ENCODE measurements at regions of chr14 and their contacts with region 1.

Region 1: GRCh38 chr14:59576332-59577294 is at the start of gene CCDC175:
- DNase-seq: peak; percentile 77 to 87
- ATAC-seq: peak; percentile 96 to 100
- H3K4me3 ChIP-seq: peak within 1 kb of the TSS; percentile 58
- H3K27ac ChIP-seq: peak within 1 kb of the TSS; percentile 52 to 71; a peak in 4 of 6 replicates
- H3K4me1 ChIP-seq: no peaks in the 10 kb centered on the region
- CTCF ChIP-seq: peak; percentile 91
- EP300 ChIP-seq: no peak
- POLR2A ChIP-seq: no peak
- RAD21 ChIP-seq: peak; percentile 78 to 85
- polyA plus RNA-seq, gene CCDC175: not detected in 2 replicates

Region 2: GRCh38 chr14:59483900-59484638 is 92.5 kb before region 1 on chr14 and contains the starts of genes JKAMP and L3HYPDH:
- CTCF ChIA-PET with region 1: interaction called, 19 read pairs
- POLR2A ChIA-PET with region 1: interaction called, 13 read pairs
- DNase-seq: peak; percentile 83 to 96
- ATAC-seq: peak; percentile 83 to 89
- H3K4me3 ChIP-seq: peak within 1 kb of the TSS; percentile 82
- H3K27ac ChIP-seq: peak within 1 kb of the TSS; percentile 98
- H3K4me1 ChIP-seq: peaks cover 39% of the 10 kb centered on the region
- CTCF ChIP-seq: peak; percentile 65
- EP300 ChIP-seq: no peak
- POLR2A ChIP-seq: peak; percentile 84
- RAD21 ChIP-seq: no peak; a peak in 1 of 5 replicates
- polyA plus RNA-seq, gene JKAMP: 254 and 266 TPM in 2 replicates
- polyA plus RNA-seq, gene L3HYPDH: 67.9 and 100.0 TPM in 2 replicates

Region 3: GRCh38 chr14:59490756-59491155 is 85.9 kb before region 1 on chr14:
- CTCF ChIA-PET with region 1: interaction called, 12 read pairs
- POLR2A ChIA-PET with region 1: no interaction called
- DNase-seq: no peak
- ATAC-seq: no peak
- H3K4me3 ChIP-seq: no peak overlapping the region
- H3K27ac ChIP-seq: no peak overlapping the region
- H3K4me1 ChIP-seq: peaks cover 9% of the 10 kb centered on the region
- CTCF ChIP-seq: no peak
- EP300 ChIP-seq: no peak
- POLR2A ChIP-seq: no peak
- RAD21 ChIP-seq: no peak

Region 4: DNA sequence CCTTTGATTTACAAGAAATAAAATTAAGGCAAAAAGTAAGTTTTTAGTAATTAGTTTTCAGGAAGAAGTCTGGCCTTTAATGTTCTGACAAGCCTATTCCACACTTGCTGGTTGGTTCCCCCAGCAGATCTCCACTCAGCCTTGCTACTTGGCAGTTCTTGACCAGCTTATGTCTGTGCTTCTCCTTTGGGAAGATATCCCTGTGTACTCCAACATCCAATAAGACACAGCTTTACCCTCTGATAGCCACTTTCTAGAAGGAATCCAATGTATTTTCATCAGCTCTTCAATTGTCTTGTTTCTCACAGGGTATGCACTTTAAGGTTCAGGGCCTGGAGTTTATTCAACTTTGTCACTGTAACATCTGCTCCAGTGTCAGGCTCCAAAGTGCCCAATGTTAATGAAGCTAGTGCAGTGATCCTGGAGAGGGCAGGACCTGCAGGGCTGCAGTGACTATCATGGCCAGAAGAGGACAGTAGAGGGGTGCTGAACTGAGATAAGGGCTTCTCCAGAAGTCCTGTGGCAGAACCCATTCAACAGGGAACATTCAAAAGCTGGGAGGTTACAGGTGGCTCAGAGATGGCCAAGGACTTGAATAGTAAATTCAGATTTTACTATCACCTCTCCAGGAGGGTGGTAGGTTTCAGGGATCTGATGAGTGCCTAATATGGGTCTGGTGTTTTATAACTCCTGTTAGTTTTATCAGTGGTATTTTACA is 69.4 kb before region 1 on chr14:
- CTCF ChIA-PET with region 1: interaction called, 52 read pairs
- POLR2A ChIA-PET with region 1: interaction called, 3 read pairs
- DNase-seq: peak; percentile 45 to 63
- ATAC-seq: peak; percentile 95
- H3K4me3 ChIP-seq: no peak overlapping the region
- H3K27ac ChIP-seq: no peak overlapping the region
- H3K4me1 ChIP-seq: no peaks in the 10 kb centered on the region
- CTCF ChIP-seq: peak; percentile 57
- EP300 ChIP-seq: no peak
- POLR2A ChIP-seq: no peak
- RAD21 ChIP-seq: peak; percentile 50 to 62; a peak in 4 of 5 replicates

Region 5: DNA sequence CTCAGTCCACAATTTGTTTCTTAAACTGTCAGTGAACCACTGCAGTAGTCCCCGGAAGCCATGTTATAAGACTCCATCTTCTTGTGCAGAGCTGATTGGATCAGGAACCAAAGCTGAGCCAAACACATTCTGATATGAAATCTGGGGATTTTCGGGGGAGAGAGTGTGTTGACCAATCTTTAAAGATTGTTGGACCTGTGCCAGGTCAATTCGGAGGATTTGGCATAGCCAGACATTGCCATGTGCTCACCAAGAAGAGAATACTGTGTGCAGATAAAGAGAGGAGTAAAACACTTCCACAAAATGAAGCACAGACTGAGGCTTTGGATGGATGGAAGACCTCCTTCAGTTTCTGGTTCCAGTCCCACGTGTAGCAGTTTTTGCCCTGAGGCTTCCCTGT is 16.3 kb before region 1 on chr14:
- CTCF ChIA-PET with region 1: interaction called, 16 read pairs
- POLR2A ChIA-PET with region 1: no interaction called
- DNase-seq: no peak
- ATAC-seq: no peak
- H3K4me3 ChIP-seq: no peak overlapping the region
- H3K27ac ChIP-seq: no peak overlapping the region
- H3K4me1 ChIP-seq: no peaks in the 10 kb centered on the region
- CTCF ChIP-seq: no peak
- EP300 ChIP-seq: no peak
- POLR2A ChIP-seq: no peak
- RAD21 ChIP-seq: no peak

Region 6: DNA sequence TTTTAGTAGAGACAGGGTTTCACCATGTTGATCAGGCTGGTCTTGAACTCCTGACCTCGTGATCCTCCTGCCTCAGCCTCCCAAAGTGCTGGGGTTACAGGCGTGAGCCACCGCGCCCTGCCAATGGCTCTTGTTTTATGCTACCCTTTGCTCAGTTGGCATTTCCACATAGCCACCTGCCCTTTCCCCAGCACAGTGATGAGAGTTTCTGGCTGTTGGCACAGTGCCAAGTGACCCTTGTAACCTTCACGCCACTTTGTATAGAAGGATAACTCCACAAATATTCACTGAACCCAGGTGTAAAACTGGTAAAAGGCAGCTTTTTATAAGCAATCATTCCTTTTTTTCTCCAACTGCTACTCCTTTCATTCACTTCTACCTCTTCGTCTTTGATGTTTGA is 18.5 kb after region 1 on chr14:
- CTCF ChIA-PET with region 1: interaction called, 20 read pairs
- POLR2A ChIA-PET with region 1: no interaction called
- DNase-seq: no peak
- ATAC-seq: no peak
- H3K4me3 ChIP-seq: no peak overlapping the region
- H3K27ac ChIP-seq: no peak overlapping the region
- H3K4me1 ChIP-seq: no peaks in the 10 kb centered on the region
- CTCF ChIP-seq: no peak
- EP300 ChIP-seq: no peak
- POLR2A ChIP-seq: no peak
- RAD21 ChIP-seq: no peak

Region 7: DNA sequence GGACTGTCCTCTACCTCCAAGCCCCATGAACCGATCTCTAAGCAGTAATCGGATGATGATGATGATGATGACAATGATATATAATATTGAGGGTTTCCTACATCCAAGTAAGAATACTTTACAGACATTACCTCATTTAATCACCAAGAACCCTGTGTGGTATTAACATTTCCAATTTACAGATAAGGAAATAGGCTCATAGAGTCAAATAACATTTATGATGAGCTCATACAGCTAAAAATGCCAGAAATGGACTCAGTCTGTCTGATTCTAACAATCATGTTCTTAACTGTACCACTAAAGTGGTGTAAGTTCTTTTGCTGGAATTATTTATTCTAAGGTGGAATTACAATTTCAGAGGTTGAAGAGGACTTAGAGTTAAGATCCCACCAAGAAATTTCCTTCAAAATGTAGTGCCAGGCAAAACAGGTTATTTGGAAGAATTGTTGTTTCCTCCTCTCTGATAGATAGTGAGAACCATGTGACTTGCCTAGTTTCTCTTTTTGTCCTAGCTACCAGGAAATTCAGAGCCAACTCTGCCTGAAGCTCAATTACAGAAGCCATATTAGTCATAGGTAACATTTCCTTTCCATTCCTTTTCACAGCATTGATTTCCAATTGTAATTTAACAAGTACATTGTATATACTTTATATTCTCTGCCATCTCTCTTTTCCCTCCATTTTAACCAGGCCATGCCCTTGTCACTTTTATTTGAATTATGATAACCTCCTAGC is 23.8 kb after region 1 on chr14:
- CTCF ChIA-PET with region 1: interaction called, 11 read pairs
- POLR2A ChIA-PET with region 1: no interaction called
- DNase-seq: no peak
- ATAC-seq: no peak
- H3K4me3 ChIP-seq: no peak overlapping the region
- H3K27ac ChIP-seq: no peak overlapping the region
- H3K4me1 ChIP-seq: no peaks in the 10 kb centered on the region
- CTCF ChIP-seq: no peak
- EP300 ChIP-seq: no peak
- POLR2A ChIP-seq: no peak
- RAD21 ChIP-seq: no peak

Region 8: GRCh38 chr14:60245380-60246177 is 669.0 kb after region 1 on chr14:
- CTCF ChIA-PET with region 1: no interaction called
- POLR2A ChIA-PET with region 1: no interaction called
- DNase-seq: no peak
- ATAC-seq: no peak
- H3K4me3 ChIP-seq: no peak overlapping the region
- H3K27ac ChIP-seq: no peak overlapping the region
- H3K4me1 ChIP-seq: peaks cover 2% of the 10 kb centered on the region; the same call in 2 of the 3 replicates
- CTCF ChIP-seq: no peak
- EP300 ChIP-seq: no peak
- POLR2A ChIP-seq: no peak
- RAD21 ChIP-seq: no peak

Measured in A549 (cell line).